ENCODE measurements at regions of chr10 and their contacts with region 1.

Region 1: GRCh38 chr10:93697207-93697606 is 5.2 kb downstream of the FRA10AC1 start:
- DNase-seq: no peak
- CTCF ChIP-seq: peak; percentile 4

Region 2: DNA sequence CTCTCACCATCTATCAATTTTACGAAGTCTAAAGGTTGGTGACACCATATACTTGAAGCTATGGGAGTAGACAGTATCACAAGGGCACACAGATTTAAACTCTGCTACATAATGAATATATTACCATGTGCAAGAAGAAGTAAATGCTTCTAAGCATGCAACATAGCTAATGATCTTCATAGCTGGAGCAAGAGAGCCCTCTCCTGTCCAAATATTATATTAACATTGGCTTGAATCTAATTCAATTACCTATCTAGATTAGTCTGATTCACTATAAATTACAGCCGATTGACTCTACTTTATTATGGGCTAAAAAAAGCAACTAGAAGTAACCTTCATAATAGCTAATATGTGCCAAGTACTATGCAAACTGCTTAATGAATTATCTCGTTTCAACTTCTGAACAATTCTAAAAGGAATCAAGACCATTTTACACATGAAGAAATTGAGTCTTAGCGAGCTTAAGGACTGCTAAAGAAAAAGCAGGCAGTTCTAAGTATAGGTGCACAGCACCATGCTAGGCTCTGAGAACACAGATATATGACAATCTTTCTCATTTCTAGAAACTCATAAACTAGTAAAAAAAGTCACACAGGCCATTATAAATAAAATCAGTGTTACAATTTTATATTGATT is 16.7 kb before region 1 on chr10:
- CTCF ChIA-PET with region 1: interaction called, 10 read pairs
- POLR2A ChIA-PET with region 1: no interaction called
- DNase-seq: no peak
- CTCF ChIP-seq: peak; percentile 25